HAP-1 (cell line): ENCODE measurements at regions of chr10 and their contacts with region 1.

Region 1: DNA sequence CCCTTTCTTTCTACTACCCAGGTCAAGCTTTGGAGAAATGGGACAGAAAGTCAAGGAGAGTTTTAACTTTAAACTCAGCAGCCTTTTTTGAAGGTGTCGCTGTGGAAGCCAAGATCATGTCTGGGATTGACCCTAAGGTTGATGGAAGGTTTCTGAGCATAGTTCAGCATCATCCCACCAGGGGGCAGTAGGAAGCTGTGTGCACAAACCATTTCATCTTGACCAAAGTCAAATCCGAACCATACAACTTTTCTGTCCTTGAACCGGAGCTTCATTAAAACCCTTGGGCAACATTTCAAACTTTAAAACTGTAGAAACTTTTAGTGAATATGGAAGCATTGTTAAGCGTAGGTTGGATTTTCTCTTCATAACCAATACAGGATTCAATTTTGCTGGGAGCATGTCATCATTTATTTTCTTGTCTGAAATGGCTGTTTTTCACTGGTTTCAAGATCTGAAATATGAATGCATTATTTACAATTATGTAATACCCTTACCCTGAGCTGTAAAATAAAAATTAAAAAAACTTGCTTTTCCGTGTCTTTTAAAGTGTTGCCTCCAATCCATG is 214.4 kb upstream of the KIAA1217 start:
- DNase-seq: peak; percentile 49 to 79
- H3K4me3 ChIP-seq: no peak overlapping the region
- H3K4me1 ChIP-seq: no peaks in the 10 kb centered on the region
- H3K27me3 ChIP-seq: peaks cover 37% of the 10 kb centered on the region

Region 2: DNA sequence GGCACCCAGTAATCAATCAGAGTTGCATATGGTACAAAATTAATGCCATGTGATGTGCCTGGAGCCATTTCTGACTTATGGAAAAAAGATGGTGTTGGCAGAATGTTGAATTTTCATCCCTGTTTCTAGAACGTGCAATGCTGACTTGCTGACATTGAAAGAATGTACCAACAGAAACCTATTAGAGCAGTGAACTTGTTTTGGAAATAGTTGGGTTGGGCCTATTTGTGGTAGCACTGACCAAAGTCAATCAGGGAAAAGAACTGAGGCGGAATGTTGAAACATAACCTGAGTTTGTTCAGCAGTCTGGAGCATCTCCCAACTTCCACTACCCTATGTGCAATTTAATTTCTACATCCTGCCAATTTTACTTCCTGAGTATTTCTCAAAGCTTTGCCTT is 202.7 kb after region 1 on chr10:
- in situ Hi-C with region 1: loop called (anchors 10 kb)
- DNase-seq: no peak
- H3K4me3 ChIP-seq: no peak overlapping the region
- H3K4me1 ChIP-seq: no peaks in the 10 kb centered on the region
- H3K27me3 ChIP-seq: no peaks in the 10 kb centered on the region

Region 3: DNA sequence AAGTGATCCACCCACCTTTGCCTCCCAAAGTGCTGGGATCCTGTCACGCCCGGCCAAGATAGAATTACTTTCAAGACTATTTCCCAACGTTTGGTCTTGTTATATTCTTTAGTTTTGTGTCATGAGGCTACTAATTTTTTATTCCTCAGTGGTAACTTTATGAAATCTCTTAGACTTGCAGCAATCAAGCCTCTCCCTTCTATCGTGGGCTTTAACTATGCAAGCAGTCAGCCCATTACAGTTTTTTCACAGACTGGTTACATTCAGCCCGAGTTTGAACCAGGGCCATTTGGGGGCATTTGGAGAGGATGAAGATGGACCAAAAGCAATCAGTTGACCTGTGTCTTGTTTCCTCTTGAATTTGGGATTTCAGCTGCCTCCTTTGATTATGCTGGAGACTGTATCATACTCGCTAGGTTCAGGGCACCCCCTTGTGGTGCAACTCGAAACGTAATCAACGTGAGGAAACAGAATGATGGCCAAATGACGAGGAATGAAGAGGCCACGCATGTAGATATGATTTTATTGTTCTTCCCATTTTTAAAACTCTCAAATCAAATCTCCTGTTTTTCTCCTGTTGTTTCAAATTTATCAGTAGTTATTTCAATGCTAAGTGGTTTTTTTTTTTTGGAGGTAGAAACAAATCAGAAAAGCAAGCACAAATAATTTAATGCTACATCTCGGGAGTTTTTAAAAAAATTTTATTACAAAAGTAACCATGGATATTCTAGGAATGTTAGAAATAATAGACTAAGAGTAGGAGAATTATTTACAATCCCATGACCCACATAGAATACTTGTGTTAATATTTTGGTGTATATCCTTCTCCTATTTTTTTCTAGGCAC is 365.9 kb after region 1 on chr10:
- in situ Hi-C with region 1: loop called (anchors 25 kb)
- DNase-seq: peak; percentile 72 to 84
- H3K4me3 ChIP-seq: no peak overlapping the region
- H3K4me1 ChIP-seq: no peaks in the 10 kb centered on the region
- H3K27me3 ChIP-seq: no peaks in the 10 kb centered on the region

Region 4: DNA sequence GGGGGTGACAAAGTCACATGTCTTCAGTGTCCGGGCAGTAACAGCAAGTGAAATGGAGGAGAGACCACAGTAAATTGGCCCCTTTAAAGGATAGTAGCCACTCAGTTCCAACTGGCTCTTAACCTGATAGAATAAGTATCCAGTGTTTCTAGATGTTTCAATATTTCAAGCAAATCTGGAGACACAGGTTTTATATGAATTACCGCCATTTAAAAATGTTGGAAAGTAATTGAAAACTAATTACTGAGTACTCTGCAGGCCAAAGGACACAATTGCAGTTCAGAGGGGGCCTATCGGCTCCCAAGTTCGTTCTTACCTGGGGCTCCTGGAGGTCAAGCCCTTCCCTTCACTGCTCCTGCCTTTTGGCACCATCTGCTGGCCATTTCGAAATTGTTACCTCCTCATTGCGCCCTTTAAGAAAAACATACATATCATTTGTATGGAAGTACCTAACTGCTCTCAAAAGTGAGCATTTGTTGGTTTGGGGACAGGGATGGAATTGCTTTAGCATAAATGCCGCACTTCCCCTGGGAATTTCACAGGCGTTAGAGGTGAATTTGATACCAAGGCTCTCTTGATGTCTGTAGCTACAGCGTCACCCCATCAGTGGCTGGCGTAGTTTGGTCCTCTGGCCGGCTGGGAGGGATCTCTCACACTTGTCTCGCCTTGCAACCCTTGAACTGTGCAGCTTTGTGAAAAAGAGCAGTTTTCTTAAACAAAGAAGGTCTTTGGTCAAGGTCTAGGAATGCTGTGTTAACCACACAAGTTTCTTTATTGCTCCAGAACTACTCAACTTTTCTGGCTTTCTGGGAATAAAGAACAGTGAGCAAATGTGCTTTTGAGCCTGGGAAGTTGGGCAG is 509.1 kb after region 1 on chr10:
- in situ Hi-C with region 1: loop called (anchors 5 kb)
- DNase-seq: peak; percentile 42 to 70
- H3K4me3 ChIP-seq: no peak overlapping the region
- H3K4me1 ChIP-seq: peaks cover 4% of the 10 kb centered on the region
- H3K27me3 ChIP-seq: no peaks in the 10 kb centered on the region